Left ventricle myocardium superior (tissue), 1 donor: ENCODE measurements at regions of chr21 and their contacts with region 1.

Region 1: DNA sequence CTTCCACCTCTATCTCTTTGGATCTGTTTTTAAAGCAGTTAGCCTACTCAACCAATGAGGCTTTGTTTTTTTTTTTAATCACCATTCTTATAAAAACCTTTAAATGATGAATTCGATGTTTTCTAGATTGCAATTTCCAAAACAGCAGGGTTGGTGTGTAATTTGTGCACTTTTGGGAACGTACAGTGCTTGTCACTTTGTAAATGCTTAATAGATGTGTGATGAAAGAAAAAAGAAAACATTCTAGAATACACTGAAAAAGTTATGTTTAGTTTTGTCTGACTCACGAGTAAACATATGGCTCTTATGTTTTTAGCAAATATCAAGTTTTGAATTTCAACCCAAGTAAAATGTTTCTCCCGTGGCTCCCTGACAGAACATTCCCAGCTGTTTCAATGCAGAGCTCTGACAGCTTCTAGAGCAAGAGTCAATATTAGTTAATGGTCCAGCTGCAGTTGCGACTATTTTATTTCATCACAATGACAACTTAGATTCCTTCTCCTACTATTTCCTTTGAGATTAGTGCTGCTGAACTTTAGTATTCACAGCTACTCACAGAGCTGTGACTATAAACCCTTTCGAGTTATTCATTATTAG is 362.5 kb upstream of the ADAMTS5 start:
- DNase-seq: no peak
- ATAC-seq: peak; percentile 73

Region 2: GRCh38 chr21:26490771-26491170 is 838.6 kb before region 1 on chr21:
- intact Hi-C with region 1: no loop called
- DNase-seq: no peak
- ATAC-seq: no peak

Region 3: GRCh38 chr21:27346041-27346448 is 16.7 kb after region 1 on chr21:
- intact Hi-C with region 1: loop called (anchors 2 kb)
- DNase-seq: no peak
- ATAC-seq: no peak